Caco-2 (cell line): ENCODE measurements at regions of chr13 and their contacts with region 1.

Region 1: DNA sequence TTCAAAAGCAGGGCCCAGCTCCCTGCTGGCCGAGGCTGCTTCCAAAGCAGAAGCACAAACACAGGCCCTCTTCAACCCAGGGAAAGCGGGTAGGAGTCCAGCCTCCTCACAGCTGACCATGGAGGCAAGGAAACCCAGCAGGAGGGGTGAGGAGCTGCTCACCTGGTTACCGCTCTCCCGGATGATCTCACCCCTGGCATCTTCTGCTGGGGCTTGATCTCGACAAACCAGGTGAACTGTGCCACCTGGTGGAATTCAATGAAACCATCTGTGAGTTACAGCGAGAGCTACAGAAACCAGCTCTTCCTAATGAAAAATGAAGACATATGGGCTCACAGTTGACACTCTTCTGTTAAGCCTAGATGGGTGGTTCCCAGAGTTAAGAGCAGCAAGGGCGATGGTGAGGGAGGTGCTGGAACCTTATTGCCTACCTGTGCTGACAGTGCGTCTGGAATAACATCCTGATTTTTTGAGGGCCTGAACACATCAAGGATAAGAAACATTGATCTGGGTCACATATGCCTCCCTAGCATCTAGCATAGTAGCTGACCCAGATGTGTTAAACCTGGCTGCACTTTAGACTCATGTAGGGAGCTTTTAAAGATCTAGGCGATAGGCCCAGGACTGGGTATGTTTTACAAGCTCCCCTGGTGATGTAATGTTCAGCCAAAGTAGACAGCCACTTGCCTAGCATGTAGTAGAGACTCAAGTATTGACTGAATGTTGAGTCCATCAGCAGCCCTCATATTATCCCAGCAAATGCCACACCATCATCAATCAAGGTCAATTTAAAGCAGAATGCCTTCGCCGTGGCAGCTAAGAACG is 6.1 kb downstream of the DHRS12 start:
- DNase-seq: peak; percentile 68 to 72
- H3K4me3 ChIP-seq: no peak overlapping the region
- H3K4me3 Mint-ChIP-seq: no peak overlapping the region
- H3K27ac Mint-ChIP-seq: no peak overlapping the region
- H3K4me1 ChIP-seq: peaks cover 13% of the 10 kb centered on the region; the same call in 1 of the 2 replicates
- H3K4me1 Mint-ChIP-seq: no peaks in the 10 kb centered on the region
- H3K27me3 ChIP-seq: no peaks in the 10 kb centered on the region
- H3K27me3 Mint-ChIP-seq: no peaks in the 10 kb centered on the region
- CTCF ChIP-seq: peak; percentile 59 to 69

Region 2: GRCh38 chr13:51435002-51435578 is 362.8 kb before region 1 on chr13:
- CTCF ChIA-PET with region 1: interaction called, 20 read pairs
- POLR2A ChIA-PET with region 1: no interaction called
- intact Hi-C with region 1: loop called (anchors 1 kb)
- DNase-seq: no peak
- H3K4me3 ChIP-seq: no peak overlapping the region
- H3K4me3 Mint-ChIP-seq: no peak overlapping the region
- H3K27ac Mint-ChIP-seq: no peak overlapping the region
- H3K4me1 ChIP-seq: peaks cover 3% of the 10 kb centered on the region; the same call in 1 of the 2 replicates
- H3K4me1 Mint-ChIP-seq: no peaks in the 10 kb centered on the region
- H3K27me3 ChIP-seq: no peaks in the 10 kb centered on the region
- H3K27me3 Mint-ChIP-seq: no peaks in the 10 kb centered on the region
- CTCF ChIP-seq: peak; percentile 55

Region 3: DNA sequence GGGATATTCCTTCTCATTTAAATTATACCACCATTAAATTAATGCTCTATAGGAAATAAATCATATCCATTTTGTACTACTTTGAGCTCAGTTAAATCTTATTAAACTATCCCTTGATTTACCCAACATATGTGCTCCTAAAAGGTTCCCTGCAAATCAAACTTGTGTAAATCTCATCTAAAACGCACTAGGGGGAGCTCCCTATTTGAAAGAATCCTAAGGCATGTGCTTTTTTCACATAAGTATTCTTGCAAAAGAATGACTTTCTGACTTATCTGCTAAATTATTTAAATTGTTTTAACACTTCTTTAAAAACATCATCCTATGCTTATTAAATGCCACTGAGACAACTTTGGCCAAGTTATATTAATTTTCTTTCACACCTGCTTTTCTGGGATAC is 353.0 kb before region 1 on chr13:
- CTCF ChIA-PET with region 1: interaction called, 8 read pairs
- POLR2A ChIA-PET with region 1: no interaction called
- intact Hi-C with region 1: loop called (anchors 2 kb)
- DNase-seq: no peak
- H3K4me3 ChIP-seq: no peak overlapping the region
- H3K4me3 Mint-ChIP-seq: no peak overlapping the region
- H3K27ac Mint-ChIP-seq: no peak overlapping the region
- H3K4me1 ChIP-seq: no peaks in the 10 kb centered on the region
- H3K4me1 Mint-ChIP-seq: no peaks in the 10 kb centered on the region
- H3K27me3 ChIP-seq: no peaks in the 10 kb centered on the region
- H3K27me3 Mint-ChIP-seq: no peaks in the 10 kb centered on the region
- CTCF ChIP-seq: peak; percentile 26 to 41